CD14-positive monocyte (primary cell): ENCODE measurements at regions of chr4 and their contacts with region 1.

Region 1: GRCh38 chr4:159102622-159103383 is at the start of gene RAPGEF2:
- DNase-seq: peak; percentile 87 to 89 (median 87)
- H3K4me3 ChIP-seq: peak within 1 kb of the TSS; percentile 84 to 94 (median 87)
- H3K4me3 Mint-ChIP-seq: peak within 1 kb of the TSS; percentile 81 to 89
- H3K27ac ChIP-seq: peak within 1 kb of the TSS; percentile 76 to 92
- H3K27ac Mint-ChIP-seq: peak within 1 kb of the TSS; percentile 74 to 91 (median 82)
- H3K4me1 ChIP-seq: peaks cover 29 to 38% of the 10 kb centered on the region in 2 donors
- H3K4me1 Mint-ChIP-seq: peaks cover 38% of the 10 kb centered on the region
- H3K27me3 ChIP-seq: peaks cover 9 to 18% of the 10 kb centered on the region in 2 donors
- H3K27me3 Mint-ChIP-seq: peaks cover 13 to 25% (median 22%) of the 10 kb centered on the region in 3 donors
- CTCF ChIP-seq: no peak
- polyA plus RNA-seq, gene RAPGEF2: 1.5 to 29.8 (median 2.0) TPM

Region 2: DNA sequence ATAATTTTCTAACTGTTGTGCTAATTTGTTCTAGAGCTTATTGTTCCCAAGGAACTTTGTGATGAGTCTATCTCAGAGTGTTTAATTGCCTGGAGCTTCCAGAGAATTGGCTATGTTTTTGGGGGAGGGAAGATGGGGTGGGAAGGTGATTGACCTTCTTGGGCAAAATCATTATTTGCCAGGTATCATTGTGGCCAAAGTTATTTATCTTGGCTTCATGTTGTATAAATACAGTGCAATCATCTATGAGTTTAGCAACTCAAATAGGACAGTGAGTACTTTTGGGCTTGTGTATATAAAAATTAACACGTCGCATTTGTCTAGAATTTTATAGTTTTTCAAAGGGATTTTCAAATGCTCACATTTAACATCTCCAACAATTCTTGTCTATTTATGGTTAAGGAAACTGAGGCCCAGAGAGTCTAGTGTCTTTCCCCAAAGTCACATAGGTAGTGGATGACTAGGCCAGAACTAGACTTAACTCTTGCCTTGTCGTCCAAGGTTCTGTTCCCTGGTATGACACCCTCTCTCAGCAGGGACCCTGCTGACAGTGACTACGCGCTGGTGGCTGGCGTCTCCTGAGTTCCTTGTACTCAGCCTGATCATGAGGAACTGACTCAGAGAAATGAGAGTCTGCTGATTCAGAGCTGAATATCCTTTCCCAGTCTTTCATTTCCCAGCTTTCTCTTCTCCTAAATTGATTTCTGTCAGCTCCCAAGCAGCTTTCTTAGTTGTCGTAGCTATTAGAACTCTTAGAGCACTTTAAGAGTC is 306.2 kb before region 1 on chr4:
- intact Hi-C with region 1: no loop called
- DNase-seq: peak; percentile 73 to 94 (median 76)
- H3K4me3 ChIP-seq: no peak overlapping the region
- H3K4me3 Mint-ChIP-seq: no peak overlapping the region
- H3K27ac ChIP-seq: peak overlapping the region in 1 of 2 donors; percentile 52
- H3K27ac Mint-ChIP-seq: peak overlapping the region in 6 of 7 donors; percentile 18 to 75 (median 34)
- H3K4me1 ChIP-seq: peaks cover 6 to 10% of the 10 kb centered on the region in 2 donors
- H3K4me1 Mint-ChIP-seq: peaks cover 32% of the 10 kb centered on the region
- H3K27me3 ChIP-seq: no peaks in the 10 kb centered on the region
- H3K27me3 Mint-ChIP-seq: no peaks in the 10 kb centered on the region
- CTCF ChIP-seq: no peak

Region 3: GRCh38 chr4:159175085-159175988 is 72.5 kb after region 1 on chr4:
- intact Hi-C with region 1: loop called (anchors 5 to 10 kb)
- DNase-seq: peak; percentile 57 to 76 (median 73)
- H3K4me3 ChIP-seq: peak overlapping the region in 1 of 3 experiments; percentile 43
- H3K4me3 Mint-ChIP-seq: peak overlapping the region in 1 of 2 donors; percentile 66
- H3K27ac ChIP-seq: peak overlapping the region in 1 of 2 donors; percentile 54
- H3K27ac Mint-ChIP-seq: peak overlapping the region in 5 of 7 donors; percentile 16 to 82 (median 64)
- H3K4me1 ChIP-seq: peaks cover 56 to 67% of the 10 kb centered on the region in 2 donors
- H3K4me1 Mint-ChIP-seq: peaks cover 74% of the 10 kb centered on the region
- H3K27me3 ChIP-seq: no peaks in the 10 kb centered on the region
- H3K27me3 Mint-ChIP-seq: no peaks in the 10 kb centered on the region
- CTCF ChIP-seq: peak; percentile 83